ENCODE measurements at regions of chr13 and their contacts with region 1.

Region 1: GRCh38 chr13:99916366-99917103 is 55.0 kb downstream of the ZIC5 start:
- DNase-seq: peak; percentile 36
- H3K4me3 Mint-ChIP-seq: no peak overlapping the region
- H3K27ac Mint-ChIP-seq: no peak overlapping the region
- H3K4me1 Mint-ChIP-seq: peaks cover 32% of the 10 kb centered on the region
- H3K27me3 Mint-ChIP-seq: peaks cover 22% of the 10 kb centered on the region

Region 2: GRCh38 chr13:99895995-99896786 is 20.3 kb before region 1 on chr13:
- CTCF ChIA-PET with region 1: interaction called, 25 read pairs
- DNase-seq: no peak
- H3K4me3 Mint-ChIP-seq: peak overlapping the region; percentile 61
- H3K27ac Mint-ChIP-seq: no peak overlapping the region
- H3K4me1 Mint-ChIP-seq: peaks cover 22% of the 10 kb centered on the region
- H3K27me3 Mint-ChIP-seq: peaks cover 76% of the 10 kb centered on the region

Region 3: DNA sequence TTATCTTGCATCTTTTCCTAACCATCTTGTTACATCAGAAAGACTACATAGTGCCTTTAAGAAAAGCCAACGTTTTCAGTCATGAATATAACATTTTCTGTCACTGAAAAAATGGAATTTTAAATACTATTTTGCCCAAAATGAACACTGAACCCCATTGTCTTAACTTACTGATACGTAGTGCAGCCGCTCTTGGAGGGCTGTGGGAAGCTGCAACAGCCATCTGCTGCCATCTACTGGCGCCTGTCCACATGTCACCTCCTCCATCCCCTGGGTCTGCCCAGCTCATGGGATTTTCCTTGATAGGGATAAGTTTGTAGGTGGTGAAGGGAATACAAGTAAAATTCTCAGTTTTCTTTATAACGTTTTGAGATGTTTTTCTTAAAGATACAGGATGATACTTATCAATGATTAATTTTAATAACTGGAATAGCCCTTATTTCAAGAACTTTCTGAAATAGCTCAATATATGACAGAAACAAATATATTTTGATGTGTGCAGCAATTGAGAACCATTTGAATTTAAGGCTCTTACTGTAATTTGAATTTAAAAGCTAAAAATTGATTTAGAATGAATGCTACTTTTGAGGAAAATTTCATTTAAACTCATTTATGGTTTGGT is 598.4 kb after region 1 on chr13:
- CTCF ChIA-PET with region 1: interaction called, 17 read pairs
- DNase-seq: peak; percentile 83
- H3K4me3 Mint-ChIP-seq: no peak overlapping the region
- H3K27ac Mint-ChIP-seq: no peak overlapping the region
- H3K4me1 Mint-ChIP-seq: peaks cover 18% of the 10 kb centered on the region
- H3K27me3 Mint-ChIP-seq: no peaks in the 10 kb centered on the region